ENCODE measurements at regions of chr22 and their contacts with region 1.

Region 1: DNA sequence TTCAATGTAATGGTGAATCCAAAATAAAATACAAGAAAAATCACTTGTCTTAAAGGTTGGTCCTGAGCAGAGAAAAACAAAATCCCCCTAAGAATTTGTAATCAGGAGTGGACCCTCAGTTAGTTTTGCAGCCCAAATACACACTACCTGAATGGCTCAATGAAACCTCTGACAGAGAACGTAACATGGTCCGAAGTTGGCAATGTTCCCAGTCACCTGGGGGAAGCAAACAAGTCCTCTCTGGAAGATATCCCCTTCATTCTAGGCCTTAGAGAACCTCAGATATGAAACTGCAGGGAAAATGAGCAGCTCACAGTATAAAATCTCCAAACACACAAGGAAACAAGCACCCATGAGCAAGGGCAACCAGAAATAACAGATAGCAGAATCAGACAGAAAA is 58.2 kb downstream of the MORC2 start:
- DNase-seq: no peak
- H3K4me3 Mint-ChIP-seq: no peak overlapping the region
- H3K27ac Mint-ChIP-seq: no peak overlapping the region
- H3K4me1 Mint-ChIP-seq: no peaks in the 10 kb centered on the region
- H3K27me3 Mint-ChIP-seq: no peaks in the 10 kb centered on the region

Region 2: DNA sequence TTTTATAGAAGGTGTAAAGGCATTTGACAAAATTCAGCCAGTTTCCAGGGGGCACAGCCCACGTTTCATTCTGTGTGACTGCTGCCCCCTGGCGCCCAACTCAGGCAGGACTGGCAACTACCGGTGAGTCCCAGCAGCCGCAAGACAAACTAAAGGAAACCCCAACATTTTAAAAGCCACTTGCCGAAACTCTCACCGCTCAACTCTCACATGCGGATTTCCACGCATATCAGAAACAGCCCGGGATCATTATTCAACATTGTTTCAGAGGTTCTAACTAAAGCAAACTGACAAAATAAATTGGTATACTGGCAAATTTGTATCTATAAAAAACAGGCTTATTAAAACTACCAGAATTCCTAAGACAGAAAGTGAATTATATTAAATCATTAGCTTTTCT is 10.0 kb after region 1 on chr22:
- CTCF ChIA-PET with region 1: interaction called, 15 read pairs
- POLR2A ChIA-PET with region 1: no interaction called
- intact Hi-C with region 1: no loop called
- DNase-seq: peak; percentile 87
- H3K4me3 Mint-ChIP-seq: peak overlapping the region; percentile 40
- H3K27ac Mint-ChIP-seq: peak overlapping the region; percentile 3
- H3K4me1 Mint-ChIP-seq: peaks cover 12% of the 10 kb centered on the region
- H3K27me3 Mint-ChIP-seq: no peaks in the 10 kb centered on the region

Measured in activated CD4-positive, alpha-beta memory T cell treated with anti-CD3 and anti-CD28 coated beads for 36 hours (primary cell).